Right lobe of liver (tissue), 6 donors: ENCODE measurements at regions of chr16 and their contacts with region 1.

Region 1: DNA sequence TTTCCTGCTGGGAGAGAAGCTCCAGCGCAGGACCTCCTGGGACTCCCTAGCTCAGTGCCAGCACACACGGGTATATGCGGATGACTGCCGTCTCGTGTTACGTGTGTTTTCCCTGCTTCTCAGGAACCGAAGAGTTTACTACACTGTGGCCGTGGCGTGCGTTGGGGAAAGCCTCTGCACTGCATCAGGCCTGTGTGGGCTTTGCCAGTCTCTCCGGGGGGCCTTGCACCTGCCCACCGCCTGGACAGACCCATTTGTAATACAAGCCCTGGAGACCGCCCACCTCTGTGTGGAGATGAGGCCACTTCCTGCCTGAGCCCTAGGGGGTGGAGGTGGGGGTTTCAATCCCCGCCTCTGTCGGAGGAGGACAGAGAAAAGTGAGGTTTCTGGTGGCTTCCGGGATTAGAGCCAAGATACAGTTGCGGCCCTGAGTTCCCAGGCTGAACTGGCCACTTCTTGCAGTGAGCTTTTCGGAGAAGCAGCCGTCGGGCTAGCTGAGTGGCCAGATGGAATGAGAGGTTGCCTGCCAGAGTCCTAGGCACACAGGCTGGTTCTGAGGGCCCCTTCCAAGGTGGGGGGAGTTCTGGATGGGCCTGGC is 43.4 kb upstream of the GSE1 start:
- DNase-seq: no peak
- ATAC-seq: peak; percentile 4 to 36 (median 26)
- H3K4me3 ChIP-seq: no peak overlapping the region
- H3K27ac ChIP-seq: peak overlapping the region in 2 of 3 donors; percentile 11 to 48
- H3K4me1 ChIP-seq: peaks cover 0 to 65% (median 20%) of the 10 kb centered on the region in 4 donors
- H3K27me3 ChIP-seq: no peaks in the 10 kb centered on the region
- CTCF ChIP-seq: no peak
- POLR2A ChIP-seq: no peak

Region 2: GRCh38 chr16:85528528-85529387 is 41.0 kb before region 1 on chr16:
- intact Hi-C with region 1: no loop called
- DNase-seq: no peak
- ATAC-seq: no peak
- H3K4me3 ChIP-seq: no peak overlapping the region
- H3K27ac ChIP-seq: no peak overlapping the region
- H3K4me1 ChIP-seq: peaks cover 0 to 54% (median 21%) of the 10 kb centered on the region in 4 donors
- H3K27me3 ChIP-seq: no peaks in the 10 kb centered on the region
- CTCF ChIP-seq: peak; percentile 23 to 54 (median 30)
- POLR2A ChIP-seq: no peak

Region 3: DNA sequence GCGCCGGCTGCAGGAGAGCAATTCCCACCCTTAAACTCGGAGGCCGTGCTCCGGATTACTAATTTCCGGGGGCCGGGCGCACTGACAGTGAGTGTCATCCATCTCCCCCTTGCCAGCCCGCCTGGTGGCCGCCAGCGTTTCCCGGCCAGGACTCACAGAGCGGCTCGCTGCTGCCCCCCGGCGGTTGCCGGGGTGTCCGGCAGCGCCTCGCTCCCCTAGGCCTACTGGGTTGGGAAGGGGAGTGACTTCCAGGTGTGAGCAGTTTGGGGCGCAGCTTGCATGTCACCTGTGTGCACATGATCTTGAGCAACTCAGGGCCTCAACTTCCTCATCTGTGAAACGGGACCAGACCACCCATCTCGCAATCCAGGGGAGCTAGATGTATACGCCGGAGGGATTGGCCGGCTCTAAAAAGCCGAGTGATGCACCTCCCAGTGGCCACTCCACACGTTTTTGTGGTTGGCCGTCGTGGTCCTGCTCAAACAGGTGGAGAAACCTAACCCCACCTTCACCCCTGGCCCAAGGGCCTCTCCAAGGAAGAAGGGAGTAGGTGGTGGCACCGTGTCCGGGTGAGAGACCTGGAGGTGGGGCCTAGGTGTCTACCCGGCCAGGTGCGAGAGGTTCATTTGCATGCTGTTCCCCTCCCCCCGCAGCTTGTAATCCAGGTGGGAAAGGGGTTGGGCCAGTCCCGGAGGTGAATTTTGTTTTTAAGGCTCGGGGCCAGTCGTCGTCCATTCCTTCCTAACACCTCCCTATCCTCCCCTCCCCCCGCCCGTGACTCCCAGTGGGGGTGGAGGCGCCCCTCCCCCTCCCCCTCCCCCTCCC is 41.0 kb after region 1 on chr16:
- intact Hi-C with region 1: loop called (anchors 5 to 10 kb)
- DNase-seq: peak; percentile 88 to 91 (median 89)
- ATAC-seq: peak; percentile 48 to 59 (median 54)
- H3K4me3 ChIP-seq: peak overlapping the region; percentile 63 to 70 (median 67)
- H3K27ac ChIP-seq: peak overlapping the region; percentile 72 to 92 (median 87)
- H3K4me1 ChIP-seq: peaks cover 0 to 35% (median 15%) of the 10 kb centered on the region in 4 donors
- H3K27me3 ChIP-seq: no peaks in the 10 kb centered on the region
- CTCF ChIP-seq: peak; percentile 98 to 99 (median 99)
- POLR2A ChIP-seq: no peak

Region 4: DNA sequence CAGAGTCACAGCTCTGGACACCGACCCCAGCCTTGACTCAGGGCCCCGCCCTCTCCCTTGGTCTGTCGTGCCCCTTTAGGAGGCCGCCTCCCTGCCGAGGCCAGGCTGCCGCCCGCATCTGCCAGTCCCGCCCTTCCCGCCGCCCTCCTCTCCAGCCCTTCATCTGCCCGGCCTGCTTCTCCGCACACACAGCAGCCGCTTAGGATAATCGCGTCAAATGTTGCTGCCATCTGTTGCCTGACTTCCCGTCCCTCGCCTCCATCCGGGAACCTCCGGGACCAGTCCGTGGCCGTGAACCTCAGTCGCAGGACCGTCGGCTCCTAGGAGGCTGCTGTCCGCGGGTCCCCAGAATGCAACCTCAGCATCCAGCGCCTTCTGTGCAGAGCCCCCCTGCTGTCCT is 55.3 kb after region 1 on chr16:
- intact Hi-C with region 1: no loop called
- DNase-seq: no peak
- ATAC-seq: no peak
- H3K4me3 ChIP-seq: no peak overlapping the region
- H3K27ac ChIP-seq: no peak overlapping the region
- H3K4me1 ChIP-seq: peaks cover 0 to 32% (median 11%) of the 10 kb centered on the region in 4 donors
- H3K27me3 ChIP-seq: no peaks in the 10 kb centered on the region
- CTCF ChIP-seq: no peak
- POLR2A ChIP-seq: no peak

Region 5: GRCh38 chr16:86016201-86016871 is 446.6 kb after region 1 on chr16:
- intact Hi-C with region 1: no loop called
- DNase-seq: no peak
- ATAC-seq: peak; percentile 84 to 91 (median 88)
- H3K4me3 ChIP-seq: no peak overlapping the region
- H3K27ac ChIP-seq: no peak overlapping the region
- H3K4me1 ChIP-seq: no peaks in the 10 kb centered on the region
- H3K27me3 ChIP-seq: no peaks in the 10 kb centered on the region
- CTCF ChIP-seq: peak; percentile 68 to 83 (median 74)
- POLR2A ChIP-seq: no peak